Heart right ventricle (tissue), 16 donors: ENCODE measurements at regions of chr22 and their contacts with region 1.

Region 1: GRCh38 chr22:36144886-36145541 is 15.5 kb downstream of the APOL3 start:
- DNase-seq: peak; percentile 46 to 79
- ATAC-seq: peak; percentile 73 to 91 (median 83)
- H3K4me3 ChIP-seq: no peak overlapping the region
- H3K27ac ChIP-seq: peak overlapping the region in 3 of 10 donors; percentile 36 to 55 (median 40)
- H3K4me1 ChIP-seq: peaks cover 3 to 50% (median 34%) of the 10 kb centered on the region in 9 donors
- H3K27me3 ChIP-seq: no peaks in the 10 kb centered on the region
- CTCF ChIP-seq: peak; percentile 46 to 89 (median 81)

Region 2: DNA sequence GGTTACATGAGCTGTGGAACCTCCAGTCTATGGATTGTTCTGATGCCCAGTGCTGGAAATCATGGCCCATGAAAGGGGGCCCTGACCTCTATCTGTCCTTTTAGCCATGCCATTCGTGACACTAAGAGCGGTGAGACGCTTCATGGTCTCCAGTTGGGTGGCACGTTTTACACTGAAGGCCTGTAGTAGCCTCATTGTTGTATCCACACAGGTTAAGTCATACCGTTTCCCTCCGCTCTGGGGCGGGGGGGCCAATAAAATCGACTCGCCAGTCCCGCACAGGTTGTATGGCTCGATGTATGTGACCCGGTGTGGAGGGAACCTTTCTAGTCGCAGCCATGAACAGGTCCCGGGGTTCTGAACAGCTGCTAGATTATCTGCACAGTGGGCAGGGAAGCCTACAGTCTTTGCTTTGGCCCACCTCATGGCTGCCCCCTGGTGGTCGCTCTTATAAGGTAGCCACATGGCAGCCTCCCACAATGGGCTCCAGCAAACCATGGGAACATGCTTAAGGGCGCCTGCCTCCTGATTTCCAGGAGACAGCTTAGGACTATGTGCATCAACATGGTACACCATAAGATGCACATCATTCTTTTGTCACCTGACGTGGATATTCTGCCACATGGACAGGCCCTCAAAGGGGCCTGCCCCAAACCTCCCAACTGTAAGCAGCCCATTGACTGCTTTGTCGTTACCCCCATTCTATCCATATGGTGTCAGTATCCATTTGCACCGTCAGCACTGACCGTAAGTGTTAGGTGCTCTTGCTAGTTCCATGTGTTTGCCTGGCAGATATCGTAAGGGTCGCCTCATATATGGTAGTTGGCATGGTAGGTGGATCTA is 35.2 kb after region 1 on chr22:
- intact Hi-C with region 1: loop called (anchors 1 to 5 kb)
- DNase-seq: peak; percentile 87 to 89
- ATAC-seq: peak; percentile 87 to 96 (median 94)
- H3K4me3 ChIP-seq: no peak overlapping the region
- H3K27ac ChIP-seq: no peak overlapping the region
- H3K4me1 ChIP-seq: peaks cover 0 to 22% (median 8%) of the 10 kb centered on the region in 9 donors
- H3K27me3 ChIP-seq: no peaks in the 10 kb centered on the region
- CTCF ChIP-seq: peak; percentile 80 to 96 (median 91)

Region 3: DNA sequence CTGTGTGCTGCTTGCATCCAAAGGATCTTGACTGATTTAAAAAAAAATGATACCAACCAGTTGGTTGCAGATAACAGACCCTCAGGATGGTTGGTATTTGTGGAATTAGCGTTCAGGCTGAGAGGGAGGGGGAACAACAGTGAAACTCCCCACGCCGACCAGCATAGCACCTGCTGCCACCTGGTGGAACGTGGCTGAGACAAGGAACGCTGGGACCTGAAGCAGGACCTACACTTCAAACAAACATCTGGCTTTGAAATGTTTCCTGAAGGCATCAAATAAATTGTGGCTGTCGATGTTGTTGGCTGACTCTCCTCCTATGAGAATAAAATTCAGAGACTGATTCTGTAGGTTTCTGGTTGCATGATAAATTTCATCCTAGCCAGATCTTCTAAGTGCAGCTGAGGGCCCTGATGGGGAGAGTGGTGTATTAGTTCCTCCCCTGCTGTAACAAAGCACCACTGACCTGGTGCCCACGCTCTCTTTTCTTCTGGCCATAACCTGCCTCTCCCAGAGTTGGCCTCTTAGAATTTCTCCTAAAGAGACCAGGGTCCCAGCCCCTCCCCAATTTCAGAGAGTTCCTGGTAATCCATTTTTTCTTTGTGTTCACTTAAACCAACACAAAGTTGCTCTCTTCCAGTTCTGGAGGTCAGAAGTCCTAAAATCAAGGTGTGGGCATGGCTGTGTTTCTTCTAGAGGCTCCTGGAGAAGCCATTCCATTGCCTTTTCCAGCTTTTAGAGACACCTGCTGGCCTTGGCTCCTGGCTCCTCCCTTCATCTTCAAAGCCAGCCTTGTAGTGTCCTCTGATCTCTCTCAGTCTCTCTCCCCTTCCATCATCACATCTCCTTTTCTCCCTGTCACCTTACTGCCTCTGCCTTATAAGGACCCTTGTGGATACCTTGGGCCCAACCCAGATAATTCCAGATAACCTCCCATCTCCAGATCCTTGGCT is 77.1 kb after region 1 on chr22:
- intact Hi-C with region 1: loop called in 1 of 10 experiments (anchors 10 kb)
- DNase-seq: peak in 1 of 2 donors; percentile 51
- ATAC-seq: peak in 7 of 8 donors; percentile 48 to 85 (median 75)
- H3K4me3 ChIP-seq: no peak overlapping the region
- H3K27ac ChIP-seq: peak overlapping the region in 1 of 10 donors; percentile 11
- H3K4me1 ChIP-seq: peaks cover 0 to 27% (median 20%) of the 10 kb centered on the region in 9 donors
- H3K27me3 ChIP-seq: no peaks in the 10 kb centered on the region
- CTCF ChIP-seq: peak; percentile 31 to 83 (median 67)

Region 4: GRCh38 chr22:36277482-36278291 is 132.7 kb after region 1 on chr22:
- intact Hi-C with region 1: loop called in 1 of 10 experiments (anchors 5 kb)
- DNase-seq: peak; percentile 57 to 65
- ATAC-seq: peak; percentile 53 to 73 (median 68)
- H3K4me3 ChIP-seq: peak overlapping the region in 1 of 10 donors; percentile 12
- H3K27ac ChIP-seq: peak overlapping the region in 3 of 10 donors; percentile 2 to 31 (median 21)
- H3K4me1 ChIP-seq: peaks cover 3 to 19% (median 11%) of the 10 kb centered on the region in 9 donors
- H3K27me3 ChIP-seq: no peaks in the 10 kb centered on the region
- CTCF ChIP-seq: peak; percentile 59 to 89 (median 82)

Region 5: GRCh38 chr22:36291831-36292740 is 147.1 kb after region 1 on chr22:
- intact Hi-C with region 1: no loop called
- DNase-seq: no peak
- ATAC-seq: peak in 4 of 8 donors; percentile 7 to 16 (median 9)
- H3K4me3 ChIP-seq: no peak overlapping the region
- H3K27ac ChIP-seq: no peak overlapping the region
- H3K4me1 ChIP-seq: peaks cover 0 to 4% (median 0%) of the 10 kb centered on the region in 9 donors
- H3K27me3 ChIP-seq: no peaks in the 10 kb centered on the region
- CTCF ChIP-seq: no peak

Region 6: DNA sequence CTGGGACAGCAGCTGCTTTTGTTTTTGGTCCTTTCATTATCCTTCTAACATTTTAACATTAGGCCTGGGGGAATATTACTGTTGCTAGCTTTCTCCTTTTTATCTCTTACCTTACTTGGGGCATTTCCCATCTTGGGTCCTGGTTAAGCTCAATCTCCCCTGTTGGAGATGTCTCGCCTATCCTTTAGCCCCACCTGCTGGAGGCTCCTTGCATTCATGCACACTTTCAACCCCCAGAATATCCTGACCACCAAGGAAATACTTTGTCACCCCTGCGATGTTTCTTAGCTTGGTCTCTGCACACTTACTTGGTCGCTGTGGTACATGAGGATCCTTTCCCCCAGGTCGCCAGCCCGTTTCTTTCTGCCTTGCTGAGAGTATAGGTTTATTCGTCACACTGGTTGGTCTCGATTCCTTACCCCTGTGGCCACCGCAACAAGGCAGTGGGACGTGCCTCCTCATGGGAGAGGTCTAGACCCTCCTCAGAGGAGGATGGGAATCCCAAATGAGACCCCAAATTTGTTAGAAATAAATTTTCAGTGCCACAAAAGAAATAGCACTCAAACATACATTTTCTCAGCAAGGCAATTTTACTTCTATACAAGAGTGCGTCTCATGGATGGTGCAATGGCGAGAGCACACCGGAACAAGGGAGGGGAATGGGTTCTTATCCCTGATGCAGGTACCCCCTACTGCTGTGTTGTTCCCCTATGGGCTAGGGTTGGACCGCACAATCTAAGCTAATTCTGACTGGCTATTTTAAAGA is 341.8 kb after region 1 on chr22:
- intact Hi-C with region 1: loop called in 4 of 10 experiments (anchors 2 to 10 kb)
- DNase-seq: peak in 1 of 2 donors; percentile 54
- ATAC-seq: no peak
- H3K4me3 ChIP-seq: no peak overlapping the region
- H3K27ac ChIP-seq: no peak overlapping the region
- H3K4me1 ChIP-seq: peaks cover 0 to 8% (median 6%) of the 10 kb centered on the region in 9 donors
- H3K27me3 ChIP-seq: no peaks in the 10 kb centered on the region
- CTCF ChIP-seq: peak; percentile 35 to 74 (median 71)